Caco-2 (cell line): ENCODE measurements at regions of chr19 and their contacts with region 1.

Region 1: GRCh38 chr19:19732579-19733501 is at the start of gene ZNF14:
- DNase-seq: peak; percentile 96 to 97
- H3K4me3 ChIP-seq: peak within 1 kb of the TSS; percentile 98
- H3K4me3 Mint-ChIP-seq: peak within 1 kb of the TSS; percentile 90
- H3K27ac Mint-ChIP-seq: peak within 1 kb of the TSS; percentile 82
- H3K4me1 ChIP-seq: no peaks in the 10 kb centered on the region; the same call in 1 of the 2 replicates
- H3K4me1 Mint-ChIP-seq: no peaks in the 10 kb centered on the region
- H3K27me3 ChIP-seq: no peaks in the 10 kb centered on the region
- H3K27me3 Mint-ChIP-seq: no peaks in the 10 kb centered on the region
- CTCF ChIP-seq: peak; percentile 20 to 32
- total RNA-seq, gene ZNF14: 4.5 and 4.9 TPM in 2 replicates

Region 2: GRCh38 chr19:19663256-19664038 is 69.4 kb before region 1 on chr19 and contains the start of gene ATP13A1:
- CTCF ChIA-PET with region 1: no interaction called
- POLR2A ChIA-PET with region 1: interaction called, 5 read pairs
- intact Hi-C with region 1: loop called (anchors 1 kb)
- DNase-seq: peak; percentile 93 to 97
- H3K4me3 ChIP-seq: peak within 1 kb of the TSS; percentile 99
- H3K4me3 Mint-ChIP-seq: peak within 1 kb of the TSS; percentile 82
- H3K27ac Mint-ChIP-seq: peak within 1 kb of the TSS; percentile 93
- H3K4me1 ChIP-seq: no peaks in the 10 kb centered on the region; the same call in 1 of the 2 replicates
- H3K4me1 Mint-ChIP-seq: no peaks in the 10 kb centered on the region
- H3K27me3 ChIP-seq: no peaks in the 10 kb centered on the region
- H3K27me3 Mint-ChIP-seq: no peaks in the 10 kb centered on the region
- CTCF ChIP-seq: no peak
- total RNA-seq, gene ATP13A1: 83.0 and 93.1 TPM in 2 replicates